Tibial artery (tissue), 4 donors: ENCODE measurements at regions of chr10 and their contacts with region 1.

Region 1: GRCh38 chr10:50508315-50509051 is 115.3 kb downstream of the SGMS1 start:
- DNase-seq: no peak
- H3K4me3 ChIP-seq: no peak overlapping the region
- H3K27ac ChIP-seq: no peak overlapping the region
- H3K4me1 ChIP-seq: peaks cover 0 to 19% (median 8%) of the 10 kb centered on the region in 4 donors
- H3K27me3 ChIP-seq: no peaks in the 10 kb centered on the region
- CTCF ChIP-seq: no peak

Region 2: GRCh38 chr10:50447691-50448090 is 60.8 kb before region 1 on chr10:
- intact Hi-C with region 1: loop called (anchors 10 kb)
- DNase-seq: no peak
- H3K4me3 ChIP-seq: no peak overlapping the region
- H3K27ac ChIP-seq: no peak overlapping the region
- H3K4me1 ChIP-seq: no peaks in the 10 kb centered on the region
- H3K27me3 ChIP-seq: no peaks in the 10 kb centered on the region
- CTCF ChIP-seq: no peak

Region 3: GRCh38 chr10:50480054-50481007 is 28.2 kb before region 1 on chr10:
- intact Hi-C with region 1: no loop called
- DNase-seq: no peak
- H3K4me3 ChIP-seq: no peak overlapping the region
- H3K27ac ChIP-seq: no peak overlapping the region
- H3K4me1 ChIP-seq: no peaks in the 10 kb centered on the region
- H3K27me3 ChIP-seq: no peaks in the 10 kb centered on the region
- CTCF ChIP-seq: no peak